Activated CD8-positive, alpha-beta T cell treated with anti-CD3 and anti-CD28 coated beads for 36 hours (primary cell): ENCODE measurements at regions of chr16 and their contacts with region 1.

Region 1: DNA sequence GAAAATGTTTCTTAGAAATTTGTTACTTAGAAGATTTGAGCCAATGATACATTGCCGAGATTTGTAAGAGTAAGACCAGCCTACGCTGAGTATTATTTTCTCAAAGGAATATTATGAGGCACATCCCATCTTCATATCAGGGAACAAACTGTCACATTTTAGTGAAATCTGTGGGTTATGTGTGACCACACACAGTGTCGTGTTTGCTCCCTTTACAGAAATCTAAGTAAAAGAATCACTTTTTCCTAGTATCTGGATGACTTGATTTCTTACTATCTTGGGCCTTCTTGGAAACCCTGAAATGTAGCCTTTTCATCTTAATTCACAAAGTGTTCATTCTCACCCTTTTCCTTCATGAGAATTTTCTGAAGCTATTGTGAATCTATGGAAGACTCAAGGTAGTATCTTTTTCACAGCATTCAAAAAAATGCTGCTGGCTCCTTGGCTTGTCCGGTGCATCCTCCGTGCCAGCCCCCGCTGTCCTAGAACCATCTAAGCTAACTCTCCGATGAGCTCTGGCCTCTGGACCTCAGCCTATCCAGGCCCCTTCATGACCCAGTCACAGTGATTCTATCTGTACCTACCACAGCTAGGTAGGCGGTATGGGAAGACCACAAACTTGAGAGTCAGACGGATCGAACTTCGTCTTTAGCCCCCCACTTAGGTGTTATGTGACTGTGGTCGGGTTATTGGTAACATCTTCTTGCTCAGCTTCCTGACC is 524.3 kb downstream of the MAF start:
- DNase-seq: peak; percentile 71
- ATAC-seq: peak; percentile 84
- H3K4me3 Mint-ChIP-seq: no peak overlapping the region
- H3K27ac Mint-ChIP-seq: peak overlapping the region; percentile 82
- H3K4me1 Mint-ChIP-seq: peaks cover 54% of the 10 kb centered on the region
- H3K27me3 Mint-ChIP-seq: peaks cover 20% of the 10 kb centered on the region
- CTCF ChIP-seq: no peak

Region 2: DNA sequence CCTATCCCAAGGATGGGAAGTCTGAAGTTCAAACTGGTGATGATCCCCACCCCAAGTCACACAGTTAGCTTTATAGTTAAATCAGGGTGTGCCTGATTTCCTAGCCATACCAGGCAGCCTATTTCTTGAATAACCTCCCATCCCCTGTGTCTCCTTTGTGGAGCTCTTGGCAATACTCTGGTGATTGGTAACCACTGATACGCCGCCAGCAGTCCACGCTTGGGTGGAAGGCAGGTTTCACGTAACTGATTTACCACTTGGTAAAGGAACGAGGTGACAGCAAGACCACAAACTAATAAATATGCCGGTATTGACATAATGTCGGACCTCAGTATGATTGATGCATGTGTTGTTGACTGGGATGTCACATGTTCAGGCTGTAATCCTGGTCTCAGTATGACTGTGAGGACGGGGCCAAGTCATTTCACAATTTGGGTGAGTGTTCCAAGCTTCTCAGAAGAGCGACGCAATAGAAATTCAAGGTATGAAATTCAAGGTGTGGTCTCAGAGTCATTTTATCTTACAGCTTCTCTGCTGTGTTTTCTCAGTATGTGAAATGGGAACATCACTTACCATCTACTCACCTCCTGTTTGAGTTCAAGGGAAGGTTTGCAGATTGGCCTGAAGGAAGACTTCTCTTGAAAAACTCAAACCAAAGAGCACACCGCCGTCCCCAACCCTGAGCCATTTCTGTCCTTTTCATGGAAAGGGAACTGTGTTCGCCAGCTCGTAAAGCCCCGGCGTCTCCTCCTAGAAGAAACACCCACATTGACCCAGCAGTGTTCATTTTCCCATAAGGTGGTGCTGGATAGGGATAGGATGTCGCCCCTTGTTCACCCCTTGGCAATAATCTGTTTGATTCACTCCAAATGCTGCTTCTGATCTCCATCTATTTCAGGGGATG is 297.9 kb before region 1 on chr16:
- CTCF ChIA-PET with region 1: no interaction called
- POLR2A ChIA-PET with region 1: no interaction called
- intact Hi-C with region 1: loop called (anchors 5 kb)
- DNase-seq: peak; percentile 71
- ATAC-seq: peak; percentile 63
- H3K4me3 Mint-ChIP-seq: no peak overlapping the region
- H3K27ac Mint-ChIP-seq: peak overlapping the region; percentile 93
- H3K4me1 Mint-ChIP-seq: peaks cover 34% of the 10 kb centered on the region
- H3K27me3 Mint-ChIP-seq: no peaks in the 10 kb centered on the region
- CTCF ChIP-seq: no peak

Region 3: GRCh38 chr16:79089735-79090284 is 13.6 kb after region 1 on chr16:
- CTCF ChIA-PET with region 1: no interaction called
- POLR2A ChIA-PET with region 1: interaction called, 10 read pairs
- intact Hi-C with region 1: no loop called
- DNase-seq: peak; percentile 89
- ATAC-seq: peak; percentile 79
- H3K4me3 Mint-ChIP-seq: peak overlapping the region; percentile 49
- H3K27ac Mint-ChIP-seq: peak overlapping the region; percentile 89
- H3K4me1 Mint-ChIP-seq: peaks cover 53% of the 10 kb centered on the region
- H3K27me3 Mint-ChIP-seq: peaks cover 8% of the 10 kb centered on the region
- CTCF ChIP-seq: no peak

Region 4: GRCh38 chr16:79316004-79316458 is 239.8 kb after region 1 on chr16:
- CTCF ChIA-PET with region 1: no interaction called
- POLR2A ChIA-PET with region 1: no interaction called
- intact Hi-C with region 1: loop called (anchors 5 kb)
- DNase-seq: peak; percentile 82
- ATAC-seq: peak; percentile 91
- H3K4me3 Mint-ChIP-seq: no peak overlapping the region
- H3K27ac Mint-ChIP-seq: peak overlapping the region; percentile 65
- H3K4me1 Mint-ChIP-seq: peaks cover 25% of the 10 kb centered on the region
- H3K27me3 Mint-ChIP-seq: peaks cover 25% of the 10 kb centered on the region
- CTCF ChIP-seq: no peak

Region 5: DNA sequence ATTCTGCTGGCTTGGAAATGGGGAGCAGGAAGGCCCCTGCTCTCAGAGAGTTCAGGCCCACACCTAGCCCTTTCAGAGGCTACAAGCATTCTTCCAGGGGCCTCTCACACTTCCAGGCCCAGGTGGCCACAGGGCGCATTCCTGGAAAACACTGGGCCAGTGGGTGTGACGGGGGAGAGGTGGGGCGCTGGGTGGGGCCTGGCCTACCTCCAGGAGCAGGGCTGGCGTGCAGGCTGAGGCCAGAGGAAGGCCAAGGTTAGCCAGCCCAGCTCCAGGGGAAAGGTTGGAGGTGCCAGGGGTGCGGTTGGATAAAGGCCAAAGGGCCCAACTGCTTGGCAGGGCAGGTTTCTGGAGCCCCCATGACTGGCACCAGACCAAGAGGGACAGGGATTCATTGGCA is 326.1 kb after region 1 on chr16:
- CTCF ChIA-PET with region 1: no interaction called
- POLR2A ChIA-PET with region 1: no interaction called
- intact Hi-C with region 1: no loop called
- DNase-seq: no peak
- ATAC-seq: no peak
- H3K4me3 Mint-ChIP-seq: no peak overlapping the region
- H3K27ac Mint-ChIP-seq: no peak overlapping the region
- H3K4me1 Mint-ChIP-seq: no peaks in the 10 kb centered on the region
- H3K27me3 Mint-ChIP-seq: no peaks in the 10 kb centered on the region
- CTCF ChIP-seq: no peak